Mucosa of descending colon (tissue), 3 donors: ENCODE measurements at regions of chr15 and their contacts with region 1.

Region 1: GRCh38 chr15:63487076-63487757 is 17.2 kb upstream of the USP3 start:
- DNase-seq: peak; percentile 92 to 98 (median 97)
- ATAC-seq: peak; percentile 98
- H3K4me3 ChIP-seq: no peak overlapping the region
- H3K4me1 ChIP-seq: peaks cover 10% of the 10 kb centered on the region
- CTCF ChIP-seq: peak; percentile 94

Region 2: DNA sequence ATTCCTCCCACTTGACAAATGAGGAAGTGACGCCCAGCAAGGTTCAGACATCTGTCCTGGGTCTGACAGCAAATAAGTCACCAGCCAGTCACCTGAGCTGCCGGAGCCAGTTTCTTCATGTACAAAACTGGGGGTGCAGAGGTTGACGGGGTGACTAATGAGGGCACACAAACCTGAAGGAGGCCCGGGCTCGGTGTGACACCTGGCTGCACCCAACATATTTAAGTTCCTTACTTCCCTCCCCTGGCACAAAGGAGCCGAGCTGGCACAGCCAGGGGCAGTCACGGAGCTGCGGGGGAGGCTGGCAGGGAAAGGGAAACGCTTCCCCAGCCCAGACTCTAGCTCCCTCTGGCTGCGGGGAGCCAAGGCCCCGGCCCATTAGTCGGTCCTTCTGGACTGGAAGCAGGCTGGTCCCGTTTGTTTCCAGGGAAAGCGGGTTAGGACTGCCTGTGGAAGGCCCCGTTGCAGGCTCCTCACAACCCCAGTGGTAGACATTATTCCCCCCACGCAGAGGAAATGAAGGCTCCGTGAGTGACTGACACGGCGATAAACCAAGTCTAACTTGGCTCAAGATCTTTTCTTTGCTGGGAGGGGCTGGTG is 112.3 kb after region 1 on chr15:
- intact Hi-C with region 1: loop called in 1 of 2 experiments (anchors 5 kb)
- DNase-seq: peak; percentile 74 to 85 (median 83)
- ATAC-seq: peak; percentile 47
- H3K4me3 ChIP-seq: no peak overlapping the region
- H3K4me1 ChIP-seq: peaks cover 37% of the 10 kb centered on the region
- CTCF ChIP-seq: peak; percentile 65